ENCODE measurements at regions of chr14 and their contacts with region 1.

Region 1: GRCh38 chr14:86654558-86655184 is 1124.7 kb downstream of the FLRT2 start:
- DNase-seq: peak in 6 of 9 experiments; percentile 9 to 31 (median 16)
- ATAC-seq: no peak
- H3K4me3 ChIP-seq: no peak overlapping the region
- H3K4me3 Mint-ChIP-seq: no peak overlapping the region
- H3K27ac ChIP-seq: no peak overlapping the region
- H3K27ac Mint-ChIP-seq: no peak overlapping the region
- H3K4me1 ChIP-seq: no peaks in the 10 kb centered on the region
- H3K4me1 Mint-ChIP-seq: no peaks in the 10 kb centered on the region
- H3K27me3 ChIP-seq: no peaks in the 10 kb centered on the region
- H3K27me3 Mint-ChIP-seq: no peaks in the 10 kb centered on the region
- CTCF ChIP-seq: no peak

Region 2: GRCh38 chr14:86462193-86462753 is 192.4 kb before region 1 on chr14:
- CTCF ChIA-PET with region 1: interaction called, 4 read pairs
- POLR2A ChIA-PET with region 1: no interaction called
- intact Hi-C with region 1: loop called (anchors 2 to 5 kb)
- DNase-seq: peak in 2 of 9 experiments; percentile 3 to 14
- ATAC-seq: no peak
- H3K4me3 ChIP-seq: no peak overlapping the region
- H3K4me3 Mint-ChIP-seq: no peak overlapping the region
- H3K27ac ChIP-seq: no peak overlapping the region
- H3K27ac Mint-ChIP-seq: no peak overlapping the region
- H3K4me1 ChIP-seq: no peaks in the 10 kb centered on the region
- H3K4me1 Mint-ChIP-seq: no peaks in the 10 kb centered on the region
- H3K27me3 ChIP-seq: no peaks in the 10 kb centered on the region
- H3K27me3 Mint-ChIP-seq: no peaks in the 10 kb centered on the region
- CTCF ChIP-seq: no peak

Region 3: GRCh38 chr14:86639146-86639545 is 15.5 kb before region 1 on chr14:
- CTCF ChIA-PET with region 1: no interaction called
- POLR2A ChIA-PET with region 1: no interaction called
- intact Hi-C with region 1: no loop called
- DNase-seq: no peak
- ATAC-seq: no peak
- H3K4me3 ChIP-seq: no peak overlapping the region
- H3K4me3 Mint-ChIP-seq: no peak overlapping the region
- H3K27ac ChIP-seq: no peak overlapping the region
- H3K27ac Mint-ChIP-seq: no peak overlapping the region
- H3K4me1 ChIP-seq: no peaks in the 10 kb centered on the region
- H3K4me1 Mint-ChIP-seq: no peaks in the 10 kb centered on the region
- H3K27me3 ChIP-seq: peaks cover 0 to 2% of the 10 kb centered on the region in 2 experiments
- H3K27me3 Mint-ChIP-seq: no peaks in the 10 kb centered on the region
- CTCF ChIP-seq: no peak